Body of pancreas (tissue), 4 donors: ENCODE measurements at regions of chr17 and their contacts with region 1.

Region 1: DNA sequence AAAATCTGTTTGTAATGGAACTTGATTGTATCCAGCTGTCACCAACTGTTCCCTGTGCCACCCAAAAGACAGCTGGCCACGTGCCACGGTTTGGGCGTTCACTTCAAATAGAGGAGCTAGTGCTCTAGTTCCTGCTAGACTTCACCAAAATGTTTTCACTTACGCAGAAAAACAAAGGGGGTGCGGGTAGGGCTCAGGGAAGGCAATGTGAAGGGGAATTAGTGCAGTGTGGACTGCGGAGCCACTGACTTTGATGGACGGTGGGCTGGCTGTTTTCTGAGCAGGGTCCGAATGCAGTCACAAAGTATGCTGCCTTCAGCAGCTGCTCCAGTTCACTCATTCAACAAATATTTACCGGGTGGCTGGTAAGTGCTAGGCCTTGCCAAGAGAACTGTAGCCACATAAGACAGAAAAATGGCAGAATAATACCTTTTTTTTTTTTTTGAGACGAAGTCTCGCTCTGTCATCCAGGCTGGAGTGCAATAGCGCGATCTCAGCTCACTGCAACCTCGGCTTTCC is 7.6 kb upstream of the CYTH1 start:
- DNase-seq: peak; percentile 82 to 89 (median 86)
- ATAC-seq: peak; percentile 95
- H3K4me3 ChIP-seq: no peak overlapping the region
- H3K27ac ChIP-seq: peak overlapping the region; percentile 76 to 88 (median 84)
- H3K4me1 ChIP-seq: peaks cover 30% of the 10 kb centered on the region
- H3K27me3 ChIP-seq: no peaks in the 10 kb centered on the region
- CTCF ChIP-seq: no peak
- POLR2A ChIP-seq: peak in 2 of 3 donors; percentile 20 to 27

Region 2: GRCh38 chr17:78741644-78742284 is 48.0 kb before region 1 on chr17:
- intact Hi-C with region 1: loop called (anchors 5 kb)
- DNase-seq: no peak
- ATAC-seq: no peak
- H3K4me3 ChIP-seq: no peak overlapping the region
- H3K27ac ChIP-seq: no peak overlapping the region
- H3K4me1 ChIP-seq: peaks cover 27% of the 10 kb centered on the region
- H3K27me3 ChIP-seq: no peaks in the 10 kb centered on the region
- CTCF ChIP-seq: no peak
- POLR2A ChIP-seq: no peak